ENCODE measurements at regions of chr2 and their contacts with region 1.

Region 1: DNA sequence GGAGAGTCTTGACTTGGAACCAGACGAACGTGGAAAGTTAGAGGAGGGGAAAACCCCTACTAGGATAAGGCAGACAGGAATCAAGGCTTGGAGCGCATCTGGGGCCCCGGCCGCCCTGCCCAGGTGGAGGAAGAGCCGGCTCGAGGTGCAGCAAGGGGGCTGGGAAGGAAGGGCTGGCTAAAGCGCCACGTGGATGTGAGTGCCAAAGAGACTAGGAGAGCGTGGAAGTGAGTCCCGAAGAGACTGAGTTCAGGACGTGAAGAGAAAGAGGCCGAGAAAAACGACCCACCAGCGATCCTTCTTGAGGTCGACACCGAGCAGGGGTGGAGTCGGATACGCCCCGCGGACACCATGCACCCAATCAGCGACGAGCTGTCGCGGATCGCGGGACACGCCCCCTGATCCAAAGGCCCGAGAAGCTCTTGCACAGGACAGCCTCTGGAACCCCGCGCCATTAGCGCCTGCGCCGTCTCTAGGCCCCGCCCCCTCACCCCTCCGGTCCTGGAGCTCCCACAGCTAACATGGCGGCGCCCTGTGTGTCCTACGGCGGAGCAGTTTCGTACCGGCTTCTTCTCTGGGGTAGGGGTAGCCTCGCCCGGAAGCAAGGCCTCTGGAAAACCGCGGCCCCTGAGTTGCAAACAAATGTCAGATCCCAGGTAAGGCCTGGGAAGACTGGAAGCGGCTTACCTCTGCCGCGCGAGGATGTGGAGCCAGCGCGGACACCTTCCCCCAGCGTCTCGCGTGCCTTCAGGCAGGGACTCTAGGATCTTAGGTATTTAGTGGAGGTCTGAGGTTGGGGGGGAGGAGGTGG is at the start of gene MRPS9:
- DNase-seq: peak; percentile 97
- ATAC-seq: peak; percentile 98
- H3K4me3 ChIP-seq: peak within 1 kb of the TSS; percentile 91
- H3K27ac ChIP-seq: peak within 1 kb of the TSS; percentile 14
- H3K4me1 ChIP-seq: peaks cover 20% of the 10 kb centered on the region
- H3K27me3 ChIP-seq: no peaks in the 10 kb centered on the region
- CTCF ChIP-seq: no peak
- total RNA-seq, gene MRPS9: 59.7 and 64.0 TPM in 2 replicates

Region 2: GRCh38 chr2:104862058-104862941 is 175.5 kb before region 1 on chr2:
- CTCF ChIA-PET with region 1: no interaction called
- POLR2A ChIA-PET with region 1: no interaction called
- intact Hi-C with region 1: no loop called
- DNase-seq: no peak
- ATAC-seq: no peak
- H3K4me3 ChIP-seq: no peak overlapping the region
- H3K27ac ChIP-seq: no peak overlapping the region
- H3K4me1 ChIP-seq: no peaks in the 10 kb centered on the region
- H3K27me3 ChIP-seq: peaks cover 79% of the 10 kb centered on the region
- CTCF ChIP-seq: no peak

Region 3: GRCh38 chr2:105005181-105005951 is 32.4 kb before region 1 on chr2:
- CTCF ChIA-PET with region 1: no interaction called
- POLR2A ChIA-PET with region 1: interaction called, 3 read pairs
- intact Hi-C with region 1: loop called (anchors 2 kb)
- DNase-seq: peak; percentile 90
- ATAC-seq: peak; percentile 91
- H3K4me3 ChIP-seq: peak overlapping the region; percentile 28; the same call in 1 of the 2 replicates
- H3K27ac ChIP-seq: peak overlapping the region; percentile 69
- H3K4me1 ChIP-seq: peaks cover 20% of the 10 kb centered on the region
- H3K27me3 ChIP-seq: no peaks in the 10 kb centered on the region
- CTCF ChIP-seq: no peak

Region 4: DNA sequence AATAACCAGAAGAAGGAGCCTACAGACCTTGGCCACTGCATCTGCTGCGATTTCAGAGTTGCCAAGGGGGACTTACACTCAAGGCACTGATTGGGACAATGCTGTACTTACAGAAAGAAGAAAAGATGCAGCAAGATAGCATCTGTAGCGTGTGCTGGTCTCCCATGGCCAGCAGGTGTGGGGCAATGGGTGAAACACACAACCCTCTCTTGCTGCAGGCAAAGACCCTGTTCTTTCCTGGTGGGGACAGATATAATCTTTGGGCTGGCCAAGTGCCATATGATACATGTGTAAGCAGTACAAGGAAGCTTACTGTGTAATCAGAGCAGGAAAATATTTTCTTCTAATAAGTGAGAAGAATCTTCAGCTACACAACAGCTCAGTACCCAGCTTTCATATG is 118.4 kb after region 1 on chr2:
- CTCF ChIA-PET with region 1: no interaction called
- POLR2A ChIA-PET with region 1: no interaction called
- intact Hi-C with region 1: no loop called
- DNase-seq: no peak
- ATAC-seq: no peak
- H3K4me3 ChIP-seq: no peak overlapping the region
- H3K27ac ChIP-seq: no peak overlapping the region
- H3K4me1 ChIP-seq: no peaks in the 10 kb centered on the region
- H3K27me3 ChIP-seq: peaks cover 66% of the 10 kb centered on the region
- CTCF ChIP-seq: no peak